ENCODE measurements at regions of chr7 and their contacts with region 1.

Region 1: DNA sequence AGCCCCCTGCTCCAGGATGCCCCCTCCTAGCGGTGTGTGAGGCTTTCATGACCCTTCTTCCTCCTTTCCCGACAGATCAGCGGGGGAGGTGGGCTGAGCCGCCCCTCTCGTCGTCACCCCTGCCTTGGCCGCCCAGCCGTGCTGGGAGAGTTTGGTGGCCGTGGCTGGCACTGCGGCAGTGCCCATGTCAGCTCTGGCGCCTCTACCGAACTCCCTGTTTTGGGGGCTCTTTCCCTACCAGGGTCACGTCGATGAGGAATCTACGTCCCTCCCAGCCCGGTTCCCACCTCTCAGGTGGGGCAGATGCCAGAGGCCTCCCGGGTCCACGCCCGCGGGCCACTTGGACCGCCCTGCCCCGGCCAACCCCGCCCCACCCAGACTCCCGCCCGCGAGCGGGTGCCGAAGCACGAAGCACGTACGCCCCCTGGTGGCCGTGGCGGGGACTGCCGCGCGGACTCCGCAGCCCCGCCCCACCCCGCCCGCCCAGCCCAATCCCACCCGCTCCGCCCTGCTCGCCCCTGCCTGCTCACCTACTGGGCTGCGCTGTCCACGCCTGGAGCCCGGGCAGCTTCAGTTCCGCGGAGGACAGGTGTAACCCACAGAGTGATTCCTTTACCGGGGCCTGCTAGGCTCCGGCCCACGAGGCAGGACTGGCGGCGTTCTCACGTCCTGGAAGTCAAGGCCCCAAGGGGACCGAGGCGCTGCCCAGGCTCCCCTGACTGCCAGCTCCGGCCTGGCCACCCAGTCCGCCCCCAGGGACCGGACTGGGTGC is 127.1 kb downstream of the UBE2H start:
- DNase-seq: peak; percentile 80 to 95 (median 87)
- ATAC-seq: peak; percentile 84
- H3K4me3 ChIP-seq: peak overlapping the region; percentile 73 to 74
- H3K4me3 Mint-ChIP-seq: peak overlapping the region; percentile 89
- H3K27ac ChIP-seq: no peak overlapping the region
- H3K27ac Mint-ChIP-seq: no peak overlapping the region
- H3K4me1 ChIP-seq: no peaks in the 10 kb centered on the region
- H3K4me1 Mint-ChIP-seq: peaks cover 17% of the 10 kb centered on the region
- H3K27me3 ChIP-seq: no peaks in the 10 kb centered on the region
- H3K27me3 Mint-ChIP-seq: no peaks in the 10 kb centered on the region
- CTCF ChIP-seq: peak; percentile 90

Region 2: DNA sequence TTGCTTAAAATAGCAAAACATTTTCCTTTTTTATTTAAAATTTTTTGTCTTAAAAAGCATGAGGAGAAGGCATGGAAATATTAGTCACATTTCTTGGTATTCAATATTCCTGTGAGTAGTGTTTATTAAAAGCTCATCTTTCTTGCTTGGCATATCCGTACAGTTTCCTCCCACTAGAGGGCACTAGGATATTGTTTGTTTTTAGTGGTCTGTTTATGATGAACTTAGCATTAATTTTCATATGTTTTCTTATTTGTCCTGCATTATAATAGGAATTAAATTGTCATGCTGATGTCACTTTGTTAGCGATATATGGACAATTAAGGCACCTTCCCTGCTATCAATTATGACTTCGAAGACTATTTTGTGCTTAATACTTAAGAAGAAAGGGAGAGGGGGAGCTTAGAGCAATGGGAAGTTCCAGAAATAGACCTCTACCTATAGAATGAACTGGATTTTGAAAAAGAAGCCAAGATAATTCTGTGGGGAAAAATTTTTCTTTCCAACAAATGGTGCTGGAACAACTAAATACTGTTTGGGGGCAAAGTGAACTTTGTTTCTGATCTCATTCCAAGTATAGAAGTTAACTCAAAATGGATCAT is 482.5 kb before region 1 on chr7:
- CTCF ChIA-PET with region 1: interaction called, 4 read pairs
- POLR2A ChIA-PET with region 1: no interaction called
- intact Hi-C with region 1: loop called (anchors 2 to 5 kb)
- DNase-seq: peak in 3 of 9 experiments; percentile 7 to 64 (median 53)
- ATAC-seq: no peak
- H3K4me3 ChIP-seq: no peak overlapping the region
- H3K4me3 Mint-ChIP-seq: no peak overlapping the region
- H3K27ac ChIP-seq: no peak overlapping the region
- H3K27ac Mint-ChIP-seq: no peak overlapping the region
- H3K4me1 ChIP-seq: no peaks in the 10 kb centered on the region
- H3K4me1 Mint-ChIP-seq: peaks cover 12% of the 10 kb centered on the region
- H3K27me3 ChIP-seq: no peaks in the 10 kb centered on the region
- H3K27me3 Mint-ChIP-seq: no peaks in the 10 kb centered on the region
- CTCF ChIP-seq: peak; percentile 80

Region 3: DNA sequence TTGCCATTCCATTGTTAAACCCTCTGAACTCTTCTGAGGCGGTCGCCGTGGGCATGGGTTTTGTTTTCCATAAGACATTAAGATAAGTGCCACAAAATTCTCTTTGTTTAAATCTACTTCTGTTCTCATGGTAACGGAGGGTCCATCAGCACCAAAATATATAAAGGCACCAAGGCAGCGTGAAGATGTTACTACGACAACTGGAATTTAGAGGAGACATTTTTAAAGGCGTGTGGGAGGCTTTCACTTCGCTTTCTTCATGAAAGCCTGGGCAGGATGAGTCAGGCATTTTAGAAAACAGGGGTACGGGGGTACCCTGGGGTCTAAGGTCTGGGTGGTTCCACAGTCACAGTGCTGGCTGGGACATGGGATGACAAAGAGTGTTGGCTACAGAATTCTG is 289.4 kb before region 1 on chr7:
- CTCF ChIA-PET with region 1: no interaction called
- POLR2A ChIA-PET with region 1: no interaction called
- intact Hi-C with region 1: no loop called
- DNase-seq: peak in 2 of 9 experiments; percentile 35 to 58
- ATAC-seq: no peak
- H3K4me3 ChIP-seq: peak overlapping the region in 1 of 2 experiments; percentile 25
- H3K4me3 Mint-ChIP-seq: peak overlapping the region; percentile 66
- H3K27ac ChIP-seq: peak overlapping the region; percentile 39 to 72
- H3K27ac Mint-ChIP-seq: peak overlapping the region; percentile 76
- H3K4me1 ChIP-seq: peaks cover 14% of the 10 kb centered on the region
- H3K4me1 Mint-ChIP-seq: peaks cover 12% of the 10 kb centered on the region
- H3K27me3 ChIP-seq: no peaks in the 10 kb centered on the region
- H3K27me3 Mint-ChIP-seq: no peaks in the 10 kb centered on the region
- CTCF ChIP-seq: no peak

Region 4: DNA sequence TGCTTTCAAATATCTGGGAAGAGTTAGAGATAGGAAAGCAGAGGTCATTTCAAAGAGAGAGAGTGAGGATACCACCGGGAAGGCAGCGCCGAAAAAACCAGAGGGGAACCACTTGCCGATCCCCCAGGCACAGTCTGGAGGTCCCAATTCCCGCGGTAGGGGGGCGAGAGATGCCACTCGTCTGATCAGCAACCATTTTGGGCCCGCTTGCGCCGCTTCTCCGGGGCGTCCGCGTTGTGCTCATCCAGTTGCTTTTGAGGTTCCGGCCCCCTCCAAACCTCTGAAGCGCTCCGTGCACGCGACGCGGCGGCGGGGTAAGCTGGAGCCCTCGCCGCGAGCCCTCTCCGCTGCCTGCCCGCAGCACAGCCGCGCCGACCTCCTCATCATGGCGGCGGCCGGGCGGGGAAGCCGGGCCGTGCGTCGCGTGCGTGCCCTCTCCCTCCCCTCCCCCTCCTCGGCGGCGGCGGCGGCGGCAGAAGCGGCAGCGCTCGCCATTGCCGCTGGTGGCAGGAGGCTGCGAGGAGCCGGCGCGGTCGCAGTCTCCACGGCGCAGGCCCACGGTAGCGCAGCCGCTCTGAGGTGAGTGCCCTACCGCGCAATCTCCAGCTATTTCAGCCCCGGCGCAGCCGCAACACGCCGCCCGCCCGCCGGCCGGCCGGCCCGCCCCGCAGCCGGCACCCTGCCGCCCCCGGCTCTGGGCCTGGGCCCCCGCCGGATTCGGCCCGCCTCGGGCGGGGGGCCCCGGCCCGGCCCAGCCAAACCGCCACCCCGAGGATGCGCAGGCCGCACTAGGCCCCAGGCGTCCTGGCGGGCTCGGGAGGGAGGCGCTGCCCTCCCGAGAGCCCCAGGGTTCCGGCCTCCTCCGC is 214.2 kb before region 1 on chr7 and contains the start of gene NRF1:
- CTCF ChIA-PET with region 1: interaction called, 9 read pairs
- POLR2A ChIA-PET with region 1: no interaction called
- intact Hi-C with region 1: loop called (anchors 1 to 2 kb)
- DNase-seq: peak; percentile 82 to 97 (median 91)
- ATAC-seq: peak; percentile 87
- H3K4me3 ChIP-seq: peak within 1 kb of the TSS; percentile 87 to 91
- H3K4me3 Mint-ChIP-seq: peak within 1 kb of the TSS; percentile 97
- H3K27ac ChIP-seq: peak within 1 kb of the TSS; percentile 68 to 85
- H3K27ac Mint-ChIP-seq: peak within 1 kb of the TSS; percentile 96
- H3K4me1 ChIP-seq: peaks cover 40% of the 10 kb centered on the region
- H3K4me1 Mint-ChIP-seq: peaks cover 67% of the 10 kb centered on the region
- H3K27me3 ChIP-seq: no peaks in the 10 kb centered on the region
- H3K27me3 Mint-ChIP-seq: no peaks in the 10 kb centered on the region
- CTCF ChIP-seq: no peak
- total RNA-seq, gene NRF1: 31.9 to 34.9 TPM

Region 5: DNA sequence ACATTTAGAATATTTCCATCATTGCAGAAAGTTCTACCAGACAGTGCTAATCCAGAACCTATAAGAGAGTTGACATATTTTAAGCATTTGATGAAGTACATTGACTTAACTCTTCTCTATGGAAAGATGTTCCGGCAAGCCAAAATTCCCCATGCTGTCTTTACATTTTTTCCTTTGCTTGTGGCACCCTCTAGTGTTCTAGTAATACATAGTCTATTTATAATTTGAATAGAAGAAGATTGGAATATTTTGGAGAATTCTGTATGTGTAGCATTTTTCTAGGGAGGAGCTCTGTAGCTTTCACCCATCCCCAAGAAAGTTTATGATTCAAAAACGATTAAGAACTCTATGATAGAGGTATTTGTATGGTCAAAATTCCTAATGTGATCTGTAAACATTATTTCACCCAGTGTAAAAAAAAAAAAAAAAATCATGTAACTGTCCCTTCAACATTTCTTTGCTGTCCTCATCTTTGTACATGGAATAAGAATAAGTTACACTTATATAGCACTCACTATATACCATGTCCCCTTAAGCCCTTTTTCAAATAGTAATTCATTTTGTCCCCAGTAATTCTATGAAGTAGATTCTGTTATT is 180.9 kb before region 1 on chr7:
- CTCF ChIA-PET with region 1: no interaction called
- POLR2A ChIA-PET with region 1: no interaction called
- intact Hi-C with region 1: no loop called
- DNase-seq: peak in 2 of 9 experiments; percentile 29 to 47
- ATAC-seq: no peak
- H3K4me3 ChIP-seq: no peak overlapping the region
- H3K4me3 Mint-ChIP-seq: no peak overlapping the region
- H3K27ac ChIP-seq: no peak overlapping the region
- H3K27ac Mint-ChIP-seq: no peak overlapping the region
- H3K4me1 ChIP-seq: no peaks in the 10 kb centered on the region
- H3K4me1 Mint-ChIP-seq: peaks cover 42% of the 10 kb centered on the region
- H3K27me3 ChIP-seq: no peaks in the 10 kb centered on the region
- H3K27me3 Mint-ChIP-seq: no peaks in the 10 kb centered on the region
- CTCF ChIP-seq: peak; percentile 27

Region 6: GRCh38 chr7:129719980-129720732 is 105.5 kb before region 1 on chr7:
- CTCF ChIA-PET with region 1: no interaction called
- POLR2A ChIA-PET with region 1: no interaction called
- intact Hi-C with region 1: loop called in 1 of 2 experiments (anchors 5 kb)
- DNase-seq: no peak
- ATAC-seq: no peak
- H3K4me3 ChIP-seq: no peak overlapping the region
- H3K4me3 Mint-ChIP-seq: no peak overlapping the region
- H3K27ac ChIP-seq: no peak overlapping the region
- H3K27ac Mint-ChIP-seq: no peak overlapping the region
- H3K4me1 ChIP-seq: no peaks in the 10 kb centered on the region
- H3K4me1 Mint-ChIP-seq: no peaks in the 10 kb centered on the region
- H3K27me3 ChIP-seq: no peaks in the 10 kb centered on the region
- H3K27me3 Mint-ChIP-seq: no peaks in the 10 kb centered on the region
- CTCF ChIP-seq: no peak

Region 7: DNA sequence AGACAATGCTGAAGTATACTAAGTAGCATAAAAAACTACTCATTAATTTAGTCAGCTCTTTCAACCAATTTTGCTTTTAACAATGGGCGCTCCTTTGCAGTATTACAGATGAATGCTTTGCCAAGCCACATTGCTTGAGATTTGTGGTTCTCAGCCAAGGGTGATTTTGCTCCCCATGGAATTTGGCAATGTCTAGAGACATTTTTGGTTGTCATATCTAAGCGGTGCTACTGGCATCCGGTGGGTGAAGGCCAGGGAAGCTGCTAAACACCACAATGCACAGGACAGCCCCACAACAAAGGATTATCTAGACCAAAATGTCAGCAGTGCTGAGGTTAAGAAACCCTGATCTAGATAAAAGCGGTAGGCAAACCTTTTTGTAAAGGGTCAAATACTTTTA is 15.1 kb after region 1 on chr7:
- CTCF ChIA-PET with region 1: interaction called, 26 read pairs
- POLR2A ChIA-PET with region 1: interaction called, 4 read pairs
- intact Hi-C with region 1: no loop called
- DNase-seq: no peak
- ATAC-seq: no peak
- H3K4me3 ChIP-seq: no peak overlapping the region
- H3K4me3 Mint-ChIP-seq: no peak overlapping the region
- H3K27ac ChIP-seq: no peak overlapping the region
- H3K27ac Mint-ChIP-seq: peak overlapping the region; percentile 63
- H3K4me1 ChIP-seq: peaks cover 37% of the 10 kb centered on the region
- H3K4me1 Mint-ChIP-seq: peaks cover 48% of the 10 kb centered on the region
- H3K27me3 ChIP-seq: no peaks in the 10 kb centered on the region
- H3K27me3 Mint-ChIP-seq: no peaks in the 10 kb centered on the region
- CTCF ChIP-seq: no peak

Region 8: GRCh38 chr7:130010689-130011412 is 185.2 kb after region 1 on chr7:
- CTCF ChIA-PET with region 1: interaction called, 34 read pairs
- POLR2A ChIA-PET with region 1: interaction called, 6 read pairs
- intact Hi-C with region 1: loop called (anchors 1 kb)
- DNase-seq: peak; percentile 78 to 92 (median 87)
- ATAC-seq: peak; percentile 96
- H3K4me3 ChIP-seq: no peak overlapping the region
- H3K4me3 Mint-ChIP-seq: no peak overlapping the region
- H3K27ac ChIP-seq: no peak overlapping the region
- H3K27ac Mint-ChIP-seq: no peak overlapping the region
- H3K4me1 ChIP-seq: no peaks in the 10 kb centered on the region
- H3K4me1 Mint-ChIP-seq: peaks cover 2% of the 10 kb centered on the region
- H3K27me3 ChIP-seq: no peaks in the 10 kb centered on the region
- H3K27me3 Mint-ChIP-seq: no peaks in the 10 kb centered on the region
- CTCF ChIP-seq: peak; percentile 79